ENCODE measurements at regions of chr2 and their contacts with region 1.

Region 1: GRCh38 chr2:219155054-219155644 is 5.5 kb downstream of the NHEJ1 start:
- DNase-seq: no peak
- H3K4me3 ChIP-seq: no peak overlapping the region
- H3K27ac ChIP-seq: no peak overlapping the region
- H3K4me1 ChIP-seq: peaks cover 12% of the 10 kb centered on the region
- H3K27me3 ChIP-seq: no peaks in the 10 kb centered on the region
- CTCF ChIP-seq: peak; percentile 45 to 71 (median 55)
- POLR2A ChIP-seq: no peak

Region 2: GRCh38 chr2:217382794-217383193 is 1772.4 kb before region 1 on chr2:
- intact Hi-C with region 1: no loop called
- DNase-seq: no peak
- H3K4me3 ChIP-seq: no peak overlapping the region
- H3K27ac ChIP-seq: no peak overlapping the region
- H3K4me1 ChIP-seq: no peaks in the 10 kb centered on the region
- H3K27me3 ChIP-seq: no peaks in the 10 kb centered on the region
- CTCF ChIP-seq: no peak
- POLR2A ChIP-seq: no peak

Region 3: DNA sequence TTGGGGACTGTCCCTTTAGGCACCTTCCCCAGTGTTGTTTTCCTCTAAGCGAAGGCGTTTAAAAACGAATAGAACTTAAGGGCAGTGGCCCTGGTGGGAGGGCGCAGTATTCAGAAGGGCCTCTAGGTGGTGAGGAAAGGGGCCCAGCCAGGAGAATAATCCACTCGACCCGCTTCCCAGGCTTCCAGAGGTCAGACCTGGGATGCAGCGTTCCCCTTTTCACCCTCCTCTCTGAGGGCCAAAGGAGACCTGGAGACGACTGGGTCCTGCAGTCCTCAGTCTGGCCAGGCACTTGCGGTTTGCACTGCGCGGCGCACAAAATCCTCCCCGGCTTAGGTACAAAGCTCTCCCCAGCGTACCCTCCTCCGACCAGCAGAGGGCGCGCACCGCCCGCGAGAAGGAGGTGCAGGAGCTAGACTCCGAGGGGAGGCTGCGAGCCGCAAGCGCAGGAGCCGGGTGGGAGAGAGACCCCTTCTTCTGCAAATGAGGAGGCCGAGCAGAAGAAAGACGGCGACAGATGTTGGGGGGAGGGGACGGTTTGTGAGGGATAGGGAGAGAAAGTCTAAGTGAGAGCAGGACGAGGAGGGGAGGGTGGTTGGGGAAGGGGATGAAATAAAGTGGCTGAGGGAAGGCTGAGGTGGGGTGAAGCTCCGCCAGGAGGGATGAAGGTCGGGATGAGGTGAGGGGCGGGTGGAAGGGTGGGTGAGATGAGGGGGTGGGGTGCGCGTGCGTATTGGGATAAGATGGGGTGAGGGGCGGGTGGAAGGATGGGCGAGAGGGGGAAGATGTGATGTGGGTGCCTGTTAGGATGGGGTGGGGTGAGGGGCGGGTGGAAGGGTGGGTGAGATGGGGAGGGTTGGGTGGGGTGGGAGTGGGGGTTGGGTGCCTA is 175.1 kb before region 1 on chr2:
- intact Hi-C with region 1: loop called (anchors 10 kb)
- DNase-seq: no peak
- H3K4me3 ChIP-seq: no peak overlapping the region
- H3K27ac ChIP-seq: no peak overlapping the region
- H3K4me1 ChIP-seq: peaks cover 40% of the 10 kb centered on the region
- H3K27me3 ChIP-seq: peaks cover 27% of the 10 kb centered on the region
- CTCF ChIP-seq: peak; percentile 53 to 81 (median 60)
- POLR2A ChIP-seq: no peak

Region 4: DNA sequence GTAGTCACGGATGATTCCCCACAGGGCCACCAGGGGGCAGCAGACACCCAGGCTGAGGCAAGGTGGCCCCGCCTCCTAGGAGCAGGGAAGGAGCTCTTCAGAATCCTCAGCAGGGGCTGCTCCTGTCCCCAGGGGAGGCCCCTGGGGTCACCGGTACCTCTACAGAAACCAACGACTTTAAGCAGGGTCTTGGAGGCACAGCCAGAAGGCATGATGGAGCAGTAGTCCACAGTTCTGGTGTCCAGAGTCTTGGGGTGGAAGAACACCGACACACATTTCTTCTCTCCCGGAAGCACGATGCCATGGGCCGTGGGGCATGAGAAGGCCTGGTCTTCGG is 125.4 kb before region 1 on chr2:
- intact Hi-C with region 1: loop called (anchors 10 kb)
- DNase-seq: no peak
- H3K4me3 ChIP-seq: no peak overlapping the region
- H3K27ac ChIP-seq: no peak overlapping the region
- H3K4me1 ChIP-seq: no peaks in the 10 kb centered on the region
- H3K27me3 ChIP-seq: peaks cover 8% of the 10 kb centered on the region
- CTCF ChIP-seq: peak; percentile 75 to 90 (median 80)
- POLR2A ChIP-seq: no peak

Region 5: DNA sequence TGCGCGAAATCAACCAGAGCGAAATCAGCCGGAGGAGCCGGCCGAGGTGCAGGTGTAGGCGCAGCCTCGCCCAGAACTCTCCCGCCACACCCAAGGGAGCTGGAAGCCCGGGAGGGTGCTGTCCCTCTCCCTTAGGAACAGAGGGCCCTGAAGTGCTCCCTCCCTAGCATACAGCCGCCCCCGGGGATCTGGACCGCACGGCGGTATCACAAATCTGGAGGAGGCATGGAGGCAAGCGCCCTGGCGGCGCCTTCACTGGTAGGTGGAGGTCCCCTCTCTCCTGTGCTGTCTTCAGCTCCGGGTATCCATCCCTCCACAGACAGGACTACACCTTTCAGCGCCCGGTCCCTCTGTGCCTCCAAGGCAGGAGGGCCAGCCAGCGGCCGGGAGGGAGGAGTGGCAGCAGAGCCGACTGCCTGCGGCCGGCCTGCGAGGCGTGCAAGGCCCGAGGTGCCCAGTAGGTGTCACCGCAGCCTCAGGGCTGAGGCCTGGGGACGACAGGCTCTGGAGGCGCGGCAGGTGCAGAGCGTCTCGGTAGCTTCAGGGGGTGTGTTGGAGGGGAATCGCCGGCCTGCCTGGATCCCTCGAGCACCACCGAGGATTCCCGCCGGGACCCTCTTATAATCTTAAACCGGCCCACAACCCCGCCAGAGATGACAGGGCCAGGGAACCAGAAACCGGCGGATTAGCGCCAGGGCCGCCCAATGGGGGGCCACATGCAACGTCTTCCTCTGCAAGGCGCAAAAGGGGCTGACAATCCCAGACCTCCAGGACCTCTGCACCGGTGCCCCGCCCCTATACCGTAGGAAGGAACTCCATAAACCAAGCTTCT is 97.2 kb before region 1 on chr2:
- intact Hi-C with region 1: loop called (anchors 10 kb)
- DNase-seq: no peak
- H3K4me3 ChIP-seq: peak overlapping the region in 1 of 2 donors; percentile 17
- H3K27ac ChIP-seq: no peak overlapping the region
- H3K4me1 ChIP-seq: peaks cover 37% of the 10 kb centered on the region
- H3K27me3 ChIP-seq: peaks cover 27% of the 10 kb centered on the region
- CTCF ChIP-seq: peak; percentile 66 to 81 (median 69)
- POLR2A ChIP-seq: no peak

Region 6: GRCh38 chr2:219171231-219171651 is 16.1 kb after region 1 on chr2:
- intact Hi-C with region 1: no loop called
- DNase-seq: peak in 1 of 2 donors; percentile 92
- H3K4me3 ChIP-seq: no peak overlapping the region
- H3K27ac ChIP-seq: peak overlapping the region; percentile 81
- H3K4me1 ChIP-seq: peaks cover 16% of the 10 kb centered on the region
- H3K27me3 ChIP-seq: no peaks in the 10 kb centered on the region
- CTCF ChIP-seq: peak; percentile 63 to 67 (median 65)
- POLR2A ChIP-seq: no peak